AG04450 (cell line): ENCODE measurements at regions of chr11 and their contacts with region 1.

Region 1: GRCh38 chr11:93741094-93741881 is at the starts of genes C11orf54 and TAF1D:
- DNase-seq: peak; percentile 96
- H3K4me3 ChIP-seq: peak within 1 kb of the TSS; percentile 74
- H3K27ac ChIP-seq: peak within 1 kb of the TSS; percentile 96
- H3K27me3 ChIP-seq: no peaks in the 10 kb centered on the region
- CTCF ChIP-seq: no peak
- polyA plus RNA-seq, gene C11orf54: 21.2 and 28.0 TPM in 2 replicates
- polyA plus RNA-seq, gene TAF1D: 106 and 151 TPM in 2 replicates

Region 2: GRCh38 chr11:93504110-93505095 is 236.9 kb before region 1 on chr11:
- CTCF ChIA-PET with region 1: no interaction called
- POLR2A ChIA-PET with region 1: interaction called, 13 read pairs
- DNase-seq: no peak
- H3K4me3 ChIP-seq: no peak overlapping the region
- H3K27ac ChIP-seq: no peak overlapping the region
- H3K27me3 ChIP-seq: no peaks in the 10 kb centered on the region
- CTCF ChIP-seq: no peak

Region 3: DNA sequence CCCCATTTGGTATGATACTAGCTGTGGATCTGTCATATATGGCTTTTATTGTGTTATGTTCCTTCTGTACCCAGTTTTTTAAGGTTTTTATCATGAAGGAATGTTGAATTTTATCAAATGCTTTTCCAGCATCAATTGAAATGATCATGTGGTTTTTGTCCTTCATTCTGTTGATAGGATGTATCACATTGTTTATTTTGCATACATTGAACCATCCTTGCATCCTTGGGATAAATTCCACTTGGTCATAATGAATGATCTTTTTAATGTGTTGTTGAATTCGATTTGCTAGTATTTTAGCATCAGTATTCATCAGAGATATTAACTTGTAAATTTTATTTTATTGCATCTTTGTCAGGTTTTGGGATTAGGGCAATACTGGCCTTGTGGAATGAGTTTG is 31.0 kb before region 1 on chr11:
- CTCF ChIA-PET with region 1: no interaction called
- POLR2A ChIA-PET with region 1: interaction called, 14 read pairs
- DNase-seq: no peak
- H3K4me3 ChIP-seq: no peak overlapping the region
- H3K27ac ChIP-seq: no peak overlapping the region
- H3K27me3 ChIP-seq: no peaks in the 10 kb centered on the region
- CTCF ChIP-seq: no peak

Region 4: GRCh38 chr11:93730108-93731107 is 10.9 kb before region 1 on chr11:
- CTCF ChIA-PET with region 1: no interaction called
- POLR2A ChIA-PET with region 1: interaction called, 24 read pairs
- DNase-seq: no peak
- H3K4me3 ChIP-seq: no peak overlapping the region
- H3K27ac ChIP-seq: no peak overlapping the region
- H3K27me3 ChIP-seq: no peaks in the 10 kb centered on the region
- CTCF ChIP-seq: no peak

Region 5: GRCh38 chr11:93784152-93784934 is 43.1 kb after region 1 on chr11 and contains the start of gene MED17:
- CTCF ChIA-PET with region 1: interaction called, 4 read pairs
- POLR2A ChIA-PET with region 1: interaction called, 80 read pairs
- DNase-seq: peak; percentile 72
- H3K4me3 ChIP-seq: peak within 1 kb of the TSS; percentile 100
- H3K27ac ChIP-seq: peak within 1 kb of the TSS; percentile 98
- H3K27me3 ChIP-seq: no peaks in the 10 kb centered on the region
- CTCF ChIP-seq: peak; percentile 57
- polyA plus RNA-seq, gene MED17: 18.6 and 23.1 TPM in 2 replicates

Region 6: GRCh38 chr11:93908689-93909088 is 167.4 kb after region 1 on chr11:
- CTCF ChIA-PET with region 1: no interaction called
- POLR2A ChIA-PET with region 1: interaction called, 11 read pairs
- DNase-seq: peak; percentile 78
- H3K4me3 ChIP-seq: no peak overlapping the region
- H3K27ac ChIP-seq: peak overlapping the region; percentile 84
- H3K27me3 ChIP-seq: no peaks in the 10 kb centered on the region
- CTCF ChIP-seq: no peak